ENCODE measurements at regions of chr17 and their contacts with region 1.

Region 1: GRCh38 chr17:82751571-82752370 is at the start of gene TBCD:
- DNase-seq: no peak
- H3K4me3 ChIP-seq: peak within 1 kb of the TSS; percentile 69 to 100 (median 98)
- H3K27ac ChIP-seq: peak within 1 kb of the TSS; percentile 81 to 94 (median 90)
- H3K4me1 ChIP-seq: peaks cover 15 to 45% (median 20%) of the 10 kb centered on the region in 3 donors
- H3K27me3 ChIP-seq: no peaks in the 10 kb centered on the region
- CTCF ChIP-seq: peak in 2 of 6 experiments; percentile 9 to 25
- POLR2A ChIP-seq: peak in 2 of 4 donors; percentile 21 to 57
- total RNA-seq, gene TBCD: 38.8 to 58.3 (median 55.0) TPM

Region 2: DNA sequence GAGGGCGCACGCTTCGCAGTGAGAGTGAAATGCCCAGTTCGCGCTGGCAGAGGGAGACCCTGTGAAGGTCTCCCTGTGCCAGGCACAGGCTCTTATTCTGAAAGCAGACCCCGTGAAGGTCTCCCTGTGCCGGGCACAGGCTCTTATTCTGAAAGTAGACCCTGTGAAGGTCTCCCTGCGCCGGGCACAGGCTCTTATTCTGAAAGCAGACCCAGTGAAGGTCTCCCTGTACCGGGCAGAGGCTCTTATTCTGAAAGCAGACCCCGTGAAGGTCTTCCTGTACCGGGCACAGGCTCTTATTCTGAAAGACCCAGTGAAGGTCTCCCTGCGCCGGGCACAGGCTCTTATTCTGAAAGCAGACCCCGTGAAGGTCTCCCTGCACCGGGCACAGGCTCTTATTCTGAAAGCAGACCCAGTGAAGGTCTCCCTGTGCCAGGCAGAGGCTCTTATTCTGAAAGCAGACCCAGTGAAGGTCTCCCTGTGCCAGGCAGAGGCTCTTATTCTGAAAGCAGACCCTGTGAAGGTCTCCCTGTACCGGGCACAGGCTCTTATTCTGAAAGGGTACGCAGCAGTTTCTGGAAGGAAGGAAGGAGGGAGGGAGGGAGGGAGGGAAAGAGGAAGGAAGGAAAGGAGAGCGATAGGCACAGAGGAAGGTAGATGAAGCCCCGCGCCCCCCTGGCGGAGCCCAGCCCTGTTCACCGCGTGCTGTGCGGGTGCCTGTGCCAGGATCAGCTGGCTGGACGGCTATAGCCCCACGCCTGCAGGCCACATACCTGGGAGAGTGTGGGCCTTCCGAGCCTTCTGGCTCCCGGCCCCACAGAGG is 158.8 kb before region 1 on chr17:
- intact Hi-C with region 1: loop called (anchors 10 kb)
- DNase-seq: no peak
- H3K4me3 ChIP-seq: peak overlapping the region; percentile 49 to 87 (median 62)
- H3K27ac ChIP-seq: peak overlapping the region; percentile 89 to 99 (median 94)
- H3K4me1 ChIP-seq: peaks cover 29 to 67% (median 42%) of the 10 kb centered on the region in 3 donors
- H3K27me3 ChIP-seq: no peaks in the 10 kb centered on the region
- CTCF ChIP-seq: no peak
- POLR2A ChIP-seq: no peak

Region 3: GRCh38 chr17:82648166-82648668 is 103.6 kb before region 1 on chr17 and contains the start of gene WDR45B:
- intact Hi-C with region 1: loop called (anchors 5 kb)
- DNase-seq: peak; percentile 79
- H3K4me3 ChIP-seq: peak within 1 kb of the TSS; percentile 72 to 100 (median 90)
- H3K27ac ChIP-seq: peak within 1 kb of the TSS; percentile 98 to 100 (median 98)
- H3K4me1 ChIP-seq: peaks cover 8 to 43% (median 17%) of the 10 kb centered on the region in 3 donors
- H3K27me3 ChIP-seq: no peaks in the 10 kb centered on the region
- CTCF ChIP-seq: no peak
- POLR2A ChIP-seq: peak; percentile 25 to 98 (median 96)
- total RNA-seq, gene WDR45B: 85.1 to 104 (median 89.3) TPM

Region 4: DNA sequence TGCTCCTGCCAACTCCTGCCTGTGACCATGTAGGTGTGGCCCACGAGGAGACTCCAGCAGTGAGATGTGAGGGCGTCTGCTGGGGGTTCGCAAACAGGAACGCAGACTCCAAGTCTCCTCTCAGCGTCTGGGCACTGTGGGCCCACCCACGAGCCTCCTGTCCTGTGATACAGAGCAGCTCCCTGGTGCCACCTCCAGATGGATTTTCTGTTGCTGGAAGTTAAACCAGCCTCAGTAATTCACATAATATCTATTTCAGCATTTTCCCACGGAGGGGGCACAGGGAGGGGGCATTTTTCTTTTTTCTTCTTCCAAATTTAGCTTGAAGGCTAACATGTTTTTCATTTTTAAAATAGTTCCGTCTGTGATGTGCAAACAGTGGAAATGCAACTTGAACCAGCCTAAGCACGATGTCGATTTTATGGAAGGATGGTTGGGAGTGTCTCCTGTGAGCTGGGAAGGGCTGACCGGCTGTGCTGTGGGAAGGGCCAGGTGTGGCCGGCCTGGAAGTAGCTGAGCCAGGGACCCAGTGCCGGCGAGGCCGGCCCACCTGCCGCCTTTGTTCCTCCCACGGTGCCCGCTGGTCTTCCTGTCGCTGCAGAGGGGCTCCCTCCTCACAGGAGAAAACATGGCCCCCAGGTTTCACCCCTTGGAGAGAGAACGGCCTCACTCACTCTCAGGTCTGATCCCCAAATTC is 49.4 kb before region 1 on chr17:
- intact Hi-C with region 1: loop called (anchors 10 kb)
- DNase-seq: no peak
- H3K4me3 ChIP-seq: peak overlapping the region in 1 of 4 donors; percentile 15
- H3K27ac ChIP-seq: peak overlapping the region; percentile 72 to 90 (median 82)
- H3K4me1 ChIP-seq: peaks cover 22 to 42% (median 25%) of the 10 kb centered on the region in 3 donors
- H3K27me3 ChIP-seq: no peaks in the 10 kb centered on the region
- CTCF ChIP-seq: no peak
- POLR2A ChIP-seq: no peak

Region 5: GRCh38 chr17:83119987-83120864 is 368.5 kb after region 1 on chr17:
- intact Hi-C with region 1: no loop called
- DNase-seq: no peak
- H3K4me3 ChIP-seq: peak overlapping the region in 1 of 4 donors; percentile 6
- H3K27ac ChIP-seq: no peak overlapping the region
- H3K4me1 ChIP-seq: peaks cover 0 to 7% (median 0%) of the 10 kb centered on the region in 3 donors
- H3K27me3 ChIP-seq: peaks cover 0 to 57% (median 0%) of the 10 kb centered on the region in 4 donors
- CTCF ChIP-seq: no peak
- POLR2A ChIP-seq: no peak

Region 6: DNA sequence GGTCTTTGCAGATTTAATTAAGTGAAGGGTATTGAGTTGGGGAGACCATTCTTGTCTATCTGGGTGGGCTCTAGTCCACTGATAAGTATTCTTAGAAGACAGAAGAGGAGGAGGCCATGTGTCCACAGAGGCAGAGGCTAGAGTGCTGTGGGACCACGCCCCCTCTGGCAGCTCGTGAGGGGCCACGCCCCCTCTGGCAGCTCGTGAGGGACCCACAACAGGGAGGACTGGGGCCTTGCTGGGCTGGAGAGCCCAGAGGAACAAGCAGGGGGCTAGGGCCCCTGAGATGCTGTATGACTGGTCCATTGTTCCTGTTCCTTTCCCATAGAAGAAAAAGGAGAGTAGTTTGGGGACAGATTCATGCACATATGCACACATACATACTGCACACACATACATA is 434.5 kb after region 1 on chr17:
- intact Hi-C with region 1: no loop called
- DNase-seq: no peak
- H3K4me3 ChIP-seq: no peak overlapping the region
- H3K27ac ChIP-seq: no peak overlapping the region
- H3K4me1 ChIP-seq: peaks cover 0 to 48% (median 7%) of the 10 kb centered on the region in 3 donors
- H3K27me3 ChIP-seq: peaks cover 0 to 14% (median 0%) of the 10 kb centered on the region in 4 donors
- CTCF ChIP-seq: no peak
- POLR2A ChIP-seq: no peak

Measured in esophagus squamous epithelium (tissue), 5 donors.